Heart left ventricle (tissue), 16 donors: ENCODE measurements at regions of chr12 and their contacts with region 1.

Region 1: DNA sequence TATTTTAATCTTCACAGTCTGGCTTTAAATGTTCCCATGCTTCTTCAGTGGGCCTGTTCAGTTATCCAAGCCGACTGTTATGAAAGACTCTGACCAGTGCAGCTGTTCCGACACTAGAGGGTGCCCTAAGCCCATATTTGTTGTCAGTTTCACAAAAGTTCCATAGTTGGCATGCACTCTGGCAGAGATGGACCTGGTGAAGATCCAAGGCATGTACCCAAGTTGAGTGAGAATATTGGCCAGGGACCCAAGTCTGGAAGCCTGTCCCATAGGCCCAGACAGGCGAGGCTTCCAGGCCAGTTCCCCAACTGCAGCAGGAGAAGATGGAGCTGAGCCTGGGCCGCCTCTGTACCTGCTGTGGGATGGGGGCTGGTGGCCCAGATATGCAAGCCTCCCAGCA is 27.4 kb upstream of the GUCY2C start:
- DNase-seq: peak; percentile 36 to 61 (median 50)
- ATAC-seq: peak; percentile 82 to 95 (median 90)
- H3K4me3 ChIP-seq: no peak overlapping the region
- H3K27ac ChIP-seq: no peak overlapping the region
- H3K4me1 ChIP-seq: no peaks in the 10 kb centered on the region
- H3K27me3 ChIP-seq: no peaks in the 10 kb centered on the region
- CTCF ChIP-seq: peak; percentile 51 to 77 (median 64)
- POLR2A ChIP-seq: no peak

Region 2: DNA sequence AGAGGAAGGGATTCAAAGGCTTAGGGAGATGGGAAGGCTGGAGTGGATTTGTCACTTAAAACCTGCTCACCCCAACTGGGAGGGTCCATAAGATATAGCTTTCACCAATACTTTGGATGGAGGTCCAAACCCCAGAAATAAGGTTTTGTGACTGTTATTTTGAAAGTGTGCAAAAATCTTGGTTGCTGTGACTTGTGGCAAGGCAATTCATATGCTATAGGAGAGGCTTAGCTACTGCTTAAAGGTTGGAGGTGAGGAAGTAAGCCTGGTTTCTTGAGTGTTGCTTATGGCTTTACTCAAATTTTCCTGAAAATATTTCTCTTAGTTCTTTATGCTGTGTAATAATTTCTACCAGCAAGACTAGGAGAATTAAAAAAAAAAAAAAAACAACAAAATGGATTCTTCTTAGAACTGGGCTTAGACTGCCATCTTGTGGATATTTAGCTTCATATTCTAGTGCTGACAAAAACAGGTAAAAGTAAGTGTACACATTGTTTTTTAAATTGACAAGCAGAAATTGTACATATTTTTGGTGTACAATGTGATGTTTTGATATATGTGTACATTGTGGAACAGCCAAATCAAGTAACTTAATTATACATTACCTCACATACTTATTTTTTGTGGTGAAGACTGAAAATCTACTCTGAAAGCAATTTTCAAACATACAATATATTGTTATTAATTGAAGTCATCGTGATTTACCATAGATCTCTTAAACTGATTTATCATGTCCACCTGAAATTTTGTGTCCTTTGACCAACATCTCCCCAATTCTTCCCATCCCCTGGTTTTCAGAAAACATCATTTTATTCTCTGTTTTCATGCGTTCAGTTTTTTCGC is 272.0 kb after region 1 on chr12:
- intact Hi-C with region 1: loop called in 7 of 10 experiments (anchors 5 to 10 kb)
- DNase-seq: no peak
- ATAC-seq: peak in 2 of 4 donors; percentile 47 to 55
- H3K4me3 ChIP-seq: no peak overlapping the region
- H3K27ac ChIP-seq: peak overlapping the region in 1 of 12 donors; percentile 6
- H3K4me1 ChIP-seq: peaks cover 0 to 22% (median 1%) of the 10 kb centered on the region in 12 donors
- H3K27me3 ChIP-seq: no peaks in the 10 kb centered on the region
- CTCF ChIP-seq: peak; percentile 62 to 88 (median 72)
- POLR2A ChIP-seq: no peak

Region 3: GRCh38 chr12:15001733-15002382 is 278.1 kb after region 1 on chr12:
- intact Hi-C with region 1: loop called in 6 of 10 experiments (anchors 5 to 10 kb)
- DNase-seq: peak in 4 of 5 donors; percentile 23 to 62 (median 56)
- ATAC-seq: peak; percentile 67 to 91 (median 78)
- H3K4me3 ChIP-seq: no peak overlapping the region
- H3K27ac ChIP-seq: peak overlapping the region in 5 of 12 donors; percentile 12 to 76 (median 15)
- H3K4me1 ChIP-seq: peaks cover 0 to 13% (median 7%) of the 10 kb centered on the region in 12 donors
- H3K27me3 ChIP-seq: peaks cover 0 to 7% (median 0%) of the 10 kb centered on the region in 9 donors
- CTCF ChIP-seq: peak in 1 of 12 donors; percentile 12
- POLR2A ChIP-seq: no peak

Region 4: DNA sequence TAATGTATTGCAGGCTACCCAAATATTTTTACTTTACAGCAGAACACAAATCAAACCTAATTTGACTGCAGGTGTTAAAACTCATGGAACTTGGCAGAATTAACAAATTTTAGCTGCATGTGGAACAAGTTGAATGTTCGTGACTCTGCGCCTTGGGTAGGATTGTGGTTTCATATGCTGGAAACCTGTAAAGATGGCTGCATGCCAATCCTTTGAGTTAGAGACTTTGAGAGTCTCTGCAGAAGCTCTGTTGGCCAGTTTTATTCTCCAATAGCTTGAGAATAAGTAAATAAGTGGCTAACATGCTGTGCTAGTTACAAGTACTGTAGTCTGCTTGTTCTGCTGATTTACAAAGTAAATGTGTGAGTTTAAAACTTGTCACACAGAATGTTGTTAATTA is 326.9 kb after region 1 on chr12:
- intact Hi-C with region 1: no loop called
- DNase-seq: no peak
- ATAC-seq: no peak
- H3K4me3 ChIP-seq: no peak overlapping the region
- H3K27ac ChIP-seq: no peak overlapping the region
- H3K4me1 ChIP-seq: peaks cover 0 to 4% (median 0%) of the 10 kb centered on the region in 12 donors
- H3K27me3 ChIP-seq: no peaks in the 10 kb centered on the region
- CTCF ChIP-seq: no peak
- POLR2A ChIP-seq: no peak

Region 5: DNA sequence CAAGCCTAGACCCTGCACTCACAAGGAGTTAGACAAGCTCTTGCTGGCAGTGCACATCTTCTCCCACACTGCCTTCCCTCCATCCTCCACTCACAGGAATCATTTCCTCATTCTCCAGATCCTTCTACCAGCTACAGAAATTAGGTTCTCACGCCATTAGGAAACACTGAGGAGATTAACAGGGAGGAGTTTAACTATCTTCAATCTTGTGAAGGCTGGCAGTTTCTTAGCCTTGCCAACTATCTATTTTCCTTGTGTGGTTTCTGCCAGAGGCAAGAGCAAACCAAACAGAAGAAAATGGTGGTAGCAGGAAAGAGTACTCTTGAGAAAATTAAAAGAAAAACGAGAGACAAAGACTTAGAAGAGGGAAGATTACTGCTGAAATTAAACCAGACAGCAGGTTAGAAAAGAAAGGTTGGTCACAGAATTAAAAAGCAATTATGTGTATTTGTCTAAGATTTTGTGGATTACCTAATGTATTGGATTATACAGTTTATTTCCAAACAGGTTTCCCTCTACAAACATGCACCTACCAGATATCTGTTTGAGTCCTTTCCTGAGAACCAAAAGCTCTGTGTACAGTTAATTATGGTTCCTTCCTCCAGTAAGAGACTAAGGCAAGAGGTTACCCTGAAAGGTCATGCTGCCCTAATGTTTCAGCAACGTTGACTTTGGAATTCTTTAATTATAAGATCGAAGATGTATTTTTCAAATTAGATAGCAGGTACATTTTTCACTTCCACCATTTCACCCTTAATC is 492.5 kb after region 1 on chr12:
- intact Hi-C with region 1: loop called in 1 of 10 experiments (anchors 5 kb)
- DNase-seq: no peak
- ATAC-seq: no peak
- H3K4me3 ChIP-seq: no peak overlapping the region
- H3K27ac ChIP-seq: peak overlapping the region in 6 of 12 donors; percentile 14 to 85 (median 60)
- H3K4me1 ChIP-seq: peaks cover 0 to 17% (median 3%) of the 10 kb centered on the region in 12 donors
- H3K27me3 ChIP-seq: peaks cover 0 to 13% (median 0%) of the 10 kb centered on the region in 9 donors
- CTCF ChIP-seq: no peak
- POLR2A ChIP-seq: no peak

Region 6: GRCh38 chr12:15268927-15269552 is 545.3 kb after region 1 on chr12:
- intact Hi-C with region 1: loop called in 2 of 10 experiments (anchors 10 kb)
- DNase-seq: peak in 3 of 5 donors; percentile 15 to 28 (median 27)
- ATAC-seq: peak in 2 of 4 donors; percentile 46 to 61
- H3K4me3 ChIP-seq: no peak overlapping the region
- H3K27ac ChIP-seq: no peak overlapping the region
- H3K4me1 ChIP-seq: no peaks in the 10 kb centered on the region
- H3K27me3 ChIP-seq: peaks cover 0 to 8% (median 0%) of the 10 kb centered on the region in 9 donors
- CTCF ChIP-seq: peak; percentile 74 to 94 (median 82)
- POLR2A ChIP-seq: no peak

Region 7: GRCh38 chr12:15276088-15276698 is 552.4 kb after region 1 on chr12:
- intact Hi-C with region 1: loop called in 1 of 10 experiments (anchors 10 kb)
- DNase-seq: peak in 1 of 5 donors; percentile 14
- ATAC-seq: peak in 2 of 4 donors; percentile 49 to 61
- H3K4me3 ChIP-seq: no peak overlapping the region
- H3K27ac ChIP-seq: no peak overlapping the region
- H3K4me1 ChIP-seq: peaks cover 0 to 15% (median 11%) of the 10 kb centered on the region in 12 donors
- H3K27me3 ChIP-seq: peaks cover 0 to 8% (median 0%) of the 10 kb centered on the region in 9 donors
- CTCF ChIP-seq: peak; percentile 56 to 80 (median 72)
- POLR2A ChIP-seq: no peak

Region 8: DNA sequence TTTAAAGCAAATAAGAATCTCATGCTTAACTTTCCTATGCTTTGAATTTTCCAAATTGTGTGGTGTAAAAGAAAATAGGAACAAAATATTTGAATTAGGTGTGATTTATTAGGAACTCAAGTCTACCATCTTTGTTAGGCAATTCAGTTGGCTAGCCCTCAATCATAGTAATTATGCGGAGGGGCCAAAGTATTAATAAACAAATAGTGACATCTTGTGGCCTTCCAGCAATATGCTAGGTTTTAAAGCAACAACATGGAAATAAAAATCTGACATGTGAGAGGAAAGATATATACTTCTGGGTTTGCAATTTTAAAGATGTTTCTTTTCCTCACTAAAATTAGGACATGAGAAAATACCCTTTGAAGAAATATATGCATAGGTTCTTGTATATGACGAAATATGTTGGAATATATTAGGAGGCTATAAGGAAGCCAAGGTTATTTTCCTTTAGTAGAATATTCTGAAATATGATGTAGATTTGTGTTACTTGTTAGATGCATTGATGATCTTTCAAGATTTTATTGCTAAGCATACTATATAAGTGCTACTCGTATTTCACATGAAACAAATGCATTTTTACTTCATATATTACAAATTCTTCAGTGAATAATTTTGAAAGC is 798.9 kb after region 1 on chr12:
- intact Hi-C with region 1: loop called in 1 of 10 experiments (anchors 10 kb)
- DNase-seq: no peak
- ATAC-seq: peak in 1 of 4 donors; percentile 54
- H3K4me3 ChIP-seq: no peak overlapping the region
- H3K27ac ChIP-seq: no peak overlapping the region
- H3K4me1 ChIP-seq: peaks cover 0 to 6% (median 0%) of the 10 kb centered on the region in 12 donors
- H3K27me3 ChIP-seq: peaks cover 0 to 29% (median 13%) of the 10 kb centered on the region in 9 donors
- CTCF ChIP-seq: peak in 11 of 12 donors; percentile 27 to 65 (median 54)
- POLR2A ChIP-seq: no peak